MCF 10A (cell line): ENCODE measurements at regions of chr11 and their contacts with region 1.

Region 1: GRCh38 chr11:47778878-47779483 is 11.8 kb upstream of the FNBP4 start:
- DNase-seq: no peak
- H3K4me3 Mint-ChIP-seq: no peak overlapping the region
- H3K27ac Mint-ChIP-seq: no peak overlapping the region
- H3K4me1 Mint-ChIP-seq: no peaks in the 10 kb centered on the region
- H3K27me3 Mint-ChIP-seq: no peaks in the 10 kb centered on the region
- CTCF ChIP-seq: no peak

Region 2: GRCh38 chr11:47675851-47676250 is 103.1 kb before region 1 on chr11:
- CTCF ChIA-PET with region 1: no interaction called
- POLR2A ChIA-PET with region 1: no interaction called
- intact Hi-C with region 1: no loop called
- DNase-seq: no peak
- H3K4me3 Mint-ChIP-seq: no peak overlapping the region
- H3K27ac Mint-ChIP-seq: no peak overlapping the region
- H3K4me1 Mint-ChIP-seq: no peaks in the 10 kb centered on the region
- H3K27me3 Mint-ChIP-seq: no peaks in the 10 kb centered on the region
- CTCF ChIP-seq: no peak

Region 3: DNA sequence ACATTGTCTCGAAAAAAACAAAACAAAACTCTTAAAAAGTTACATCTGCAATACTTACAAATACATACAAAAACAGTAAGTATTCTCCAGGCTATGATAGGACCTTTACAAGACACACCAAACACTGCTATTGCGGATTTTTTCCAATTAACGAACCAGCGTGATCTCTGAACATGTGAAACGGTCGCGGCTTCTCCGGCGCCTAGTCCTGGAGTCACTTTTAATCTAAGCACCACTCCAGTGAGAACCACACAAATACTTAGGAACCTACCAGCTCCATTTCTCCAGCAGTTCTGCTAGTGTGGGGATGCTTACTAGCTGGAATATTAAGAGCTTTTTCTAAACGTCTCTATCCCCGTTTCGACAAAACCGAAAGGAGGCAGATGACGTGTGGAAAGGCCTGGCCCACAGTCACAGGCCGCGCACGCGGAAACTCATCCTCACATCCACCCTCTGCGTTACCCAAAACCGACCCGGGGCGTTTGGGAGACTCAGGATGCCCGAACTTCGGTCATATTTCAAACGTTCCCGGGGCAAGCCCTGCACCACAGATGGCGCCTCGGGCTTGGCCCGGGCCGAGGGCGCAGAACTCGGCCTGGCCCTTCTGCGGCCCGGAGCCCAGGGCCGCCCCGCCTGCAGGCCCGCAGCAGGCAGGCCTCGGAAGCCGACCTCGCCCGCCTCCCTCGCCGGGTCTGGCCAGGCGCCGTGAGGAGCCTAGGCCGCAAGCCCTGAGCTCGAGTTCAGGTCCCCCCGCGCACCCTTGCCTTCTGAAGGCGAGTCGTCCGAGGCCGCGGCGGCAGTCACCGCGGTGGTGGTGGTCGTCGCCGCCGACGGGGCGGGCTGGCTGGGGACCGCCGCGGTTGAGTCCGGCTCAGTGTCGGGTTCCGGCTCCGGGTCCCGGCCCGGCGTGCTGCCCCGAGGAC is 12.4 kb before region 1 on chr11:
- CTCF ChIA-PET with region 1: interaction called, 3 read pairs
- POLR2A ChIA-PET with region 1: interaction called, 18 read pairs
- intact Hi-C with region 1: no loop called
- DNase-seq: peak; percentile 62
- H3K4me3 Mint-ChIP-seq: peak overlapping the region; percentile 79
- H3K27ac Mint-ChIP-seq: peak overlapping the region; percentile 93
- H3K4me1 Mint-ChIP-seq: peaks cover 14% of the 10 kb centered on the region
- H3K27me3 Mint-ChIP-seq: no peaks in the 10 kb centered on the region
- CTCF ChIP-seq: no peak